ENCODE measurements at regions of chr17 and their contacts with region 1.

Region 1: GRCh38 chr17:31696184-31696602 is 162.9 kb downstream of the COPRS start:
- DNase-seq: peak; percentile 92
- ATAC-seq: peak; percentile 95

Region 2: DNA sequence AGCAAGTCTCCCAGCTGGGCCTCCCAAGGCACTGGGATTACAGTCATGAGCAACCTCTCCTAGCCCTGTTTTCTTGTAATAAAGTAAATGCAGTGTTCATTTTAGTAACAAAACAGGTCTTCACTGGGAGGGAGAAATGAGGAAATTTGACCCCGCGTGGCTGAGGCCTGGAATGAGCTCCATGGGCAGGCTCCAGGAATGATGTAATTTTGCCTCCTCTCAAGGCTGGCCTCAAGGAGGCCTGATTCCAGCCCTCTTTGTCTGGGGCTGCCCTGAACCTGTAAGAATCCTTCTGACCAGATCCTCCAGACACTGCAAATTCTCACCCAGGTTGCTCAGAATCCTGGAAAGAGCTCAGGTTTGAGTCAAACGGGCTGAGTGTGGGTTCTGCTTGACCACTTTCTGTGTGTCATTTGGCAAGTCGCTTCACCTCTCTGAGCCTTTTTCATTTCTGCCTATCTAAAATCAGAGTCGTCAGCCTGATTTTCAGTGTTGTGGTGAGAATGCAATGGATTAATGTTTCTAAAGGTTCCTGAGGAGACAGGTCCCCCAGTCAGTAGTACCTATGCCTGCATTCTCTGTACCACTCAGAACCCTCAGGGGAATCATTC is 247.6 kb before region 1 on chr17:
- intact Hi-C with region 1: no loop called
- DNase-seq: no peak
- ATAC-seq: no peak

Region 3: GRCh38 chr17:31558748-31559644 is 137.2 kb before region 1 on chr17:
- intact Hi-C with region 1: loop called (anchors 2 kb)
- DNase-seq: peak; percentile 90
- ATAC-seq: peak; percentile 90

Region 4: GRCh38 chr17:31580316-31581021 is 115.7 kb before region 1 on chr17:
- intact Hi-C with region 1: no loop called
- DNase-seq: no peak
- ATAC-seq: no peak

Region 5: GRCh38 chr17:31738996-31739699 is 43.0 kb after region 1 on chr17:
- intact Hi-C with region 1: loop called (anchors 1 kb)
- DNase-seq: no peak
- ATAC-seq: peak; percentile 76

Region 6: DNA sequence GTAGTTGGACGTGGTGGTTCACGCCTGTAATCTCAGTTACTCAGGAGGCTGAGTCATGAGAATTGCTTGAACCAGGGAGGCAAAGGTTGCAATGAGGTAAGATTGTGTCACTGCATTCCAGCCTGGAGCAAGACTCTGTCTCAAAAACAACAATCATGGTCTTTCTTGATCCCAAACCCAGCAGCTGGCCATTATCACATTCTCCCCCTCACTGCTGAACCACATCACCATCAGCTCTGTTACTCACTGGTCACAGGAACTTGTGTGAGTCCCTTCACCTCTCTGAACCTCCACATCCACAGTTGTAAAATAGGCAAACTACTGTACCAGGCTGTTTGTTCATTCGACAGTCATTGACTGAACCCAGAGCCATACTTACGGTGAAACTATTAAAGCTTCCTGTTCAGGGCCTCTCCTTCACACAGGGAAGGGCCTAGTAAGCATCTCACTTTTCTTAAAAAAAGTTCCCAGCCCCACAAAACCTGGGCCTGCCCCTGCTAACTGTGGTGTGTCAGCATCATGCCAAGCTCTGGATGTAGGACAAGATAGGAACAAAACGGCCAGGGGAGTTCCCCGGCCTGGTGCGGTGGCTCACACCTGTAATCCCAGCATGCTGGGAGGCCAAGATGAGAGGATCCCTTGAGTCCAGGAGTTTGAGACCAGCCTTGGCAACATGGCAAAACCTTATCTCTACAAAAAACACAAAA is 58.2 kb after region 1 on chr17:
- intact Hi-C with region 1: no loop called
- DNase-seq: no peak
- ATAC-seq: no peak